Dendritic cell treated with granulocyte-macrophage colony-stimulating factor and Interleukin-4, amounts not matched to agents 40 ng/mL and 50 ng/mL, for 4 days (primary cell): ENCODE measurements at regions of chr19 and their contacts with region 1.

Region 1: DNA sequence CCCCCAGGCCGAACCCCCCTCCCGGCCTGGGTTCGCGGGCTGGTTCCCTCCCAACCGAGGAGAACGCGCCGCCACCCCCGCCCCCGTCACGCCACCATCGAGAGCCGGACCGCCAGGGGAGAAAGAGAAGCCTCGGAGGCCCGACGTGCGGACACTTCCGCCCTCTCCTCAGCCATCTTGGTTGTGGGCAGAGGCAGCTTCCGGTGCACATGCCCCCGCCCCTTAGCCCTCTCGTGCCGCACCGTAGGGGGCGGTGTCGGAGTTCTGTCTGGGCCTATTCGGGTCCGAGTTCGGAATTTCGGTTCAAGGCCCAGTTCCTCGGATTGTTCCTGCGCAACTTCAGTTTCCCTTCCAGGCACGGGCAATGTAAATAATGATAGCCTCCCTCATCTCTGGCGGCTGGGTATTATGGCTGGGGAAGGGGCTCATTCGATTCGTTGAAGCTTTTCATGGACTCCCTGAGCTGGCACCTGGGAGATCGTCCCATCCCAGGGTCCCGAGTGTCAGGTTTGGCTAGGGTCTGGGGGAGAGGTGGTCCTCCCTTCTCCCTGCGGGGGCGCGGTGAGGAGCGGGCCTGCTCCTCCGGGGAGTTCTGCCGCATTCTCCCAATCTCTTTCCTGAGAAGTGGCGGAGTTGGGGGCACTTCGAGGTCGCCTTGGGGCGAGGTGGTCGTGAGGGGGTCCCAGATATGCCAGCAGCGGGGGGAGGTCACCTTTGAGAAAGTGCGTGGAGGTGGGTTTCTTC is at the starts of genes IER2 and STX10:
- H3K4me3 Mint-ChIP-seq: peak within 1 kb of the TSS; percentile 97
- H3K27ac Mint-ChIP-seq: peak within 1 kb of the TSS; percentile 99
- H3K4me1 Mint-ChIP-seq: peaks cover 48% of the 10 kb centered on the region
- H3K27me3 Mint-ChIP-seq: no peaks in the 10 kb centered on the region

Region 2: DNA sequence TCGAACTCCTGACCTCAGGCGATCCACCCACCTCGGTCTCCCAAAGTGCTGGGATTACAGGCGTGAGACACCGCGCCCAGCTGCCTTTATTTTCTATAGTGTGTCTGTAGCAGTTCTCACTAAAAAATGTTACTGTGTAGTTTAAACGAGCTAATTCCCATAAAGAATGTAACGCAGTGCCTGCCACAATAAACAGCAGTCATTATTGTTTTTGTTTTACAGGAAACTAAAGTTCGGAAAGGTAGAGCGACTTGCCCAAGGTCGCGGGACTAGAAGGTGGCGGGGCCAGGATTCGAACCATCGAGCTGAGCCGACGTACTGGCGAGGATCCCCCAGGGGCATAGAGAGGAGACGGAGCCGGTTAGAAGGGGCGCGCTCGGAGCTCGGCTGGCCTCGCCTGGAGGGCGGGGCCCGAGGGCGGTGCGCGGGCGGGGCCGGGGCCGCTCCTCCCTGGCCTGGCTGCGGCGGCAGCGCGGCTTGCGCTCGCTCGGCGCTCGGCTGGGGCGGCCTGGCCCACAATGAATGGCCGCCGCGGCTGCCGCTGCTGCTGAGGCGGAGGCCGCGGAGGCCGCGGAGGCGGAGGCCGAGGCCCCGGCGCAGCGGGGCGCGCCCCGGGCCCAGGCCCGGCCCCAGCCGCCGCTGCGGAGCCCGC is 32.5 kb before region 1 on chr19 and contains the start of gene NACC1:
- intact Hi-C with region 1: loop called (anchors 2 kb)
- H3K4me3 Mint-ChIP-seq: peak within 1 kb of the TSS; percentile 89
- H3K27ac Mint-ChIP-seq: peak within 1 kb of the TSS; percentile 83
- H3K4me1 Mint-ChIP-seq: peaks cover 68% of the 10 kb centered on the region
- H3K27me3 Mint-ChIP-seq: no peaks in the 10 kb centered on the region

Region 3: GRCh38 chr19:13128583-13128982 is 21.8 kb before region 1 on chr19:
- intact Hi-C with region 1: no loop called
- H3K4me3 Mint-ChIP-seq: no peak overlapping the region
- H3K27ac Mint-ChIP-seq: no peak overlapping the region
- H3K4me1 Mint-ChIP-seq: peaks cover 44% of the 10 kb centered on the region
- H3K27me3 Mint-ChIP-seq: no peaks in the 10 kb centered on the region

Region 4: DNA sequence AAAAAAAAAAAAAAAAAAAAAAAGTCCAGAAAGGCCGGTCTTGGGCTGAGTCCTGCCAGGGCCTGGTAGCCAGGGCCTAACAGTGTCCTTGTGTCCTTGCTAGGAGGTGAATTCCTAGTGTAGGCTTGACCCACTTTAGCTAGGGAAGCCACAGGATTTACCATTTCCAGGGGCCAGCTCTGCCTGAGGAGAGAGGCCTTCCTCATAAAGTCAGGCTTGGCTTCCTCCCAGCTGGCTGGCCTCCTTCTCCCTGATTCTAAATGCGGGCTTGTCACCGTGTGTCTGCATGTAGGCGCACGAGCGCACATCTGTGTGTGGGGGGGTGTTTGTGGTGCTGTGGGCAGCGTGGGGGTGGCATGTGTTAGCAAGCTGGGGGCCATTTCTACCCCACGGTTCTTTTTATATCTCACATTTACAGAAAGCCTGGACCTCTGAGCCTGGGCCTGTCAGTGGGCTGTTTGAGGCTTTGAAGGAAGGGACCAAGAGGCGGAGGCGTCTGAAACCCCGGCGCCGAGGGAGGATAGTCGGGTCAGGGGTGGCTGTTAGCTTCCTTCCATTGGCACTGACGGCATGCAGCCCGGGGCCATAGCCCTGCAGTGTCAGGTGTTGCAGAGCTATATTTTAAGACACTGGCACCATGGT is 31.5 kb after region 1 on chr19:
- intact Hi-C with region 1: no loop called
- H3K4me3 Mint-ChIP-seq: no peak overlapping the region
- H3K27ac Mint-ChIP-seq: peak overlapping the region; percentile 76
- H3K4me1 Mint-ChIP-seq: peaks cover 14% of the 10 kb centered on the region
- H3K27me3 Mint-ChIP-seq: peaks cover 1% of the 10 kb centered on the region